Astrocyte of the cerebellum (primary cell): ENCODE measurements at regions of chr16 and their contacts with region 1.

Region 1: GRCh38 chr16:19907161-19907992 is 22.7 kb upstream of the GPRC5B start:
- DNase-seq: peak; percentile 49
- H3K4me3 ChIP-seq: no peak overlapping the region
- CTCF ChIP-seq: peak; percentile 98

Region 2: GRCh38 chr16:20023190-20023589 is 115.8 kb after region 1 on chr16:
- in situ Hi-C with region 1: loop called (anchors 25 kb)
- DNase-seq: peak; percentile 16
- H3K4me3 ChIP-seq: no peak overlapping the region
- CTCF ChIP-seq: no peak

Region 3: DNA sequence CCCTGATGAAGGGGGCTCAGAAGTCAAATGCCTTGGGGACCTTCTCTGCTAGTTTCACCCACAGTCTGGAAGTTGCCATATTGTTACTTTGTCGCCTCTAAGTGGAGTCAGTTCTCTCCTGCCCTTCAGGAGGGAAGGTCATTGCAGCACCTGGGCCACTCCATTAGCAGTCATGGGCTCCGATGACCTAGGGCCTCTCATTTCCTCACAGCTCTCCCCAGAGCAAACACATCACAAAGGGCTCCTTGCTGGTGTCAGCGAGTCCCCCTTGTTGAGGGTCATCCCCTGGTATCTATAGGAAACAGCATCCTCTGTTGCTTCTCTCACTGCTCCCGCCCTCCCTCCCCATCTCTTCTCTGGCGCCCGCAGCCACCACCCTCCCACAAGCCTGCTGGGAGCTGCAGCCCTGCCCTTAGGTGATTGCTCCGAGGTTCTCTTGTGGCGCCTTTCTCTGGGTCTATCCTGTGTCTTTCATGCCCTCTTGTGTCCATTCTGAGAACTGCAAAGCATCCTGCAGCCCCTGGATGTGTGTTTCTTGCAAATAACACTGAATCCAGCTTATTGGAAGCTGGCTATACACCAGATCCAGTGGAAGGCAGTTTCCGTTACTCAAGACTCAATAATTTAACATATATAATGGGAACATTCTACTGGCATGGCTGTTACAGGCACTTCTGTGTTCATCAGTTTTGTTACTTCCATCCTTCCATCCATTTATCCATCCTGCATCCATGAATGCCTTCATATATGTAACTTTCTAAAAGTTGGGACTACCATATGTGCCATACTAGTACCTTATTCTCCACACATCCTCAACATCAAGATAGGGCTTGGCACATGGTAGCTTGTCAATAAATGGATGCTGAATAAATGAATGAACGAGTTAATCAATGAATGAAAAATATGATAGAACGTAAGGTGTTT is 476.0 kb after region 1 on chr16:
- in situ Hi-C with region 1: loop called (anchors 25 kb)
- DNase-seq: peak; percentile 31
- H3K4me3 ChIP-seq: no peak overlapping the region
- CTCF ChIP-seq: peak; percentile 89